AG04450 (cell line): ENCODE measurements at regions of chr1 and their contacts with region 1.

Region 1: GRCh38 chr1:30111431-30111830 is 612.0 kb downstream of the MATN1 start:
- DNase-seq: no peak
- H3K4me3 ChIP-seq: no peak overlapping the region
- H3K27ac ChIP-seq: no peak overlapping the region
- H3K27me3 ChIP-seq: peaks cover 7% of the 10 kb centered on the region
- CTCF ChIP-seq: peak; percentile 66

Region 2: DNA sequence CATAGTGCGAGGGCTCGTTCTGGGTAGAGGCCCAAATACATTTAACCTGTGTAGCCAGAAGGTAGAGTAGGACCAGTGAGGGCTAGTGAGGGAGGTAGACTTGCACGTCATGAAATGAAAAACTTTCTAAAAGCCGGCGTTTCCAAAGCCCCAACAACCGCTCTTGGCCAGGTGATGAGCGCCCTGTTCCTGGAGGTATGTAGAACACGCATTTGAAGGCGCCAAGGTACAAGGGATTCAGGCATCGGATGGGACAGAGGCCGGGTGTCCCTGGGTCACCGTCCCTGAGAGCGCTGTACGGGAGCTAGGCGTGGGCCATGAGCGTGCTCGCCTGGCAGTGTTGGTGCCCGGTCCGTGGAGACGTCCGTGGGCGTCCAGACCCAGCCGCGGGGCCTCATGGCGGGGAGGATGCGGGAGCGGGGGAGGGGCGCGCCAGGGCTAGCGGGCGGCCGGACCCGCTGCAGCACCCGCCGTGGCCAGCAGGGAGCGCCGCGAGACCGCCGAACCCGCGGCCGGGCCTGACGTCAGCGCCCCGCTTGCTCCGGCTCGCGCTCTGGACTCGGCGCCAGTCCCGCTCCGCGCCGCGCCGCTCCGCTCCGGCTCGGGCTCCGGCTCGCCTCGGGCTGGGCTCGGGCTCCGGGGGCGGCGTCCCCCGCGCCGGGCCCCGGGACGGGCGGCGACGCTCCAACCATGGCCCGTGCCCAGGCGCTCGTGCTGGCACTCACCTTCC is 875.3 kb before region 1 on chr1 and contains the start of gene PTPRU:
- CTCF ChIA-PET with region 1: interaction called, 11 read pairs
- POLR2A ChIA-PET with region 1: no interaction called
- DNase-seq: no peak
- H3K4me3 ChIP-seq: peak within 1 kb of the TSS; percentile 78
- H3K27ac ChIP-seq: no peak within 1 kb of the TSS
- H3K27me3 ChIP-seq: peaks cover 11% of the 10 kb centered on the region
- CTCF ChIP-seq: peak; percentile 43
- polyA plus RNA-seq, gene PTPRU: 7.8 and 9.7 TPM in 2 replicates

Region 3: DNA sequence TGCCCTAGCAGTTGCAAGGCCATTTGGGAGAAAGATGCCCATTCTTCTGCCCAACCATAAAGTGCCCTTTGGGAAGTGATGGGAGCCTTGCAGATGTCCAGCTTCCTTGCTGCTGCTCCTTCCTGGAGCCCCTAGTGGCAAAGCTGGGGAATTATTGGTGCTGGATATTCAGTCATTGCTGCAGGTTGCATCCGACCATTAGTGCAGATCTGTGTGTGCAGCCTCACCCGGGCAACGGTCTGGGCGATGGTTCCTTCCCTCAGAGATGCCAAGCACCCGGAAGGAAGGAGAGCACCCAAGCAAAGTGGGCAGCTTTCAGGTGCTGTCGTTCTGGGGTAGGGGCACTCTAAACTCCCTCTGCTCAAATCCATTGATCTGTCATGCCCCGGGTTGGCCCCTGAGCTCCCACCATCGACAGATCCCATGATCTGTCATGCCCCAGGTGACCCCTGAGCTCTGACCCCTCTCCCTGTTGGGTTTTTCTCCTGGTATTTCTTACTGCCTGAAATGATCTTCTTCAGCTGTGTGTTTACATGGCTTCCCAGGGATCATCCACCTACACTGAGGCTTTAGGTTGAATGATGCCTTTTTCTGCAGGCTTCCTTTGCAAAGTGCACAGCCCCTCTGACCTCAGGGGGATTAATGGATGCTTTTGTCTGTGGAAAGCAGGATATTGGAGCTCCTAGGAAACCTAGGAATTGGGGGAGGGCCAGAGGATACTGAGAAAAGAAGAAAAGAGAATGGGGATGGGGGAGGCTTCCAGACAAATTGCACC is 407.6 kb before region 1 on chr1:
- CTCF ChIA-PET with region 1: interaction called, 14 read pairs
- POLR2A ChIA-PET with region 1: no interaction called
- DNase-seq: no peak
- H3K4me3 ChIP-seq: no peak overlapping the region
- H3K27ac ChIP-seq: no peak overlapping the region
- H3K27me3 ChIP-seq: peaks cover 4% of the 10 kb centered on the region
- CTCF ChIP-seq: peak; percentile 93

Region 4: DNA sequence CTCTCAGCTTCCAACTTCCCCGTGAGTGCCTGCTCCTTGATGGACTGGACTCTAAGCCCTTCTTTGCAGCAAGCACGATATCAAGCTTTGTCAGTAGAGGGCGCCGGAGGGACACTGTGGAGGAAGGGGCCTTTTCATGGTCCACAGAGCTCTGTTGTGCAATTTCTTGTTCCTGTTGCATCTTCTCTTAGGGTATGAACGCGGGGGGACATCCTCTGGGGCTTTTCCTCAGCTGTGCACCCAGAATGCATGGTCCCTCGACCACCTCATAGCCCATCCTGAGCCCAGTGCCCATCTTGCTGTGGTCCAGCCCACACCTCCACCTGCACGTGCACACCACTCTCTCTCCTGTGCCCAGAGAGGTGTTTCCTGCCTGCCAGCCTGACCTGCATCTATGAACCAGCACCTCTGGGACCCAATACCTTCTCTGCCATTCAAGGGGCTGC is 318.3 kb before region 1 on chr1:
- CTCF ChIA-PET with region 1: interaction called, 27 read pairs
- POLR2A ChIA-PET with region 1: no interaction called
- DNase-seq: peak; percentile 48
- H3K4me3 ChIP-seq: no peak overlapping the region
- H3K27ac ChIP-seq: no peak overlapping the region
- H3K27me3 ChIP-seq: peaks cover 3% of the 10 kb centered on the region
- CTCF ChIP-seq: peak; percentile 91

Region 5: DNA sequence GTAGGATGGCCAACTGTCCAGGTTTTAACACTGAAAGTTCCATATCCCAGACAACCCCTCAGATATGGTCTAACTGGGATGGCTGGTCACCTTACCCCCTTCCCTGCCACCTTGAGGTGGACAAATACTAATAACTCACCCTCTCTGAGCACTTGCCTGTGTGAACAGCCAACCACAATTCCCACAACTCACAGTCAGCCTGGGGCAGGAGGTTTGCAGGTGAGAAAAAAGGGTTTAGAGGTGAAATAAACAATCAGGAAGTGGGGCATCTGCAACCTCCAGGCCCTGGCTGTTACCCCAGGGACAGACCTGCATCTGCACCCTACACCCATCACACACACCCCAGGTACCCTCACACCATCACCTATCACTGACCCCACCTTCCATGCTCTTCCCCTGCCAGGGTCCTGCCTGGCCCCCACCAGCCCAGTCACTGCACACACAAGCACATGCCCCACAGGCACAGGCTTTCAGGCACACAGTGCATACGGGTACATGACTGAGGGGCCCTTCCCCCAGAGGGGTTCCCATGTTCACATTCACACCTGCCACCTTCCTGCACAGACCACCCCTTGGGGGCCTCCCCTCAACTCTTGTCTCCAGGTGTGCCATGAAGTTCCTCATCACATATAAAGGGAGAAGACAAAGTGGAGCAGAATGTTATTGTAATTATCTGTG is 67.6 kb before region 1 on chr1:
- CTCF ChIA-PET with region 1: no interaction called
- POLR2A ChIA-PET with region 1: no interaction called
- DNase-seq: no peak
- H3K4me3 ChIP-seq: no peak overlapping the region
- H3K27ac ChIP-seq: no peak overlapping the region
- H3K27me3 ChIP-seq: no peaks in the 10 kb centered on the region
- CTCF ChIP-seq: no peak

Region 6: GRCh38 chr1:30085811-30086770 is 25.3 kb before region 1 on chr1:
- CTCF ChIA-PET with region 1: interaction called, 10 read pairs
- POLR2A ChIA-PET with region 1: no interaction called
- DNase-seq: no peak
- H3K4me3 ChIP-seq: peak overlapping the region; percentile 29; the same call in 1 of the 2 replicates
- H3K27ac ChIP-seq: no peak overlapping the region
- H3K27me3 ChIP-seq: peaks cover 6% of the 10 kb centered on the region
- CTCF ChIP-seq: peak; percentile 60